Activated CD8-positive, alpha-beta T cell treated with anti-CD3 and anti-CD28 coated beads for 36 hours (primary cell): ENCODE measurements at regions of chr17 and their contacts with region 1.

Region 1: DNA sequence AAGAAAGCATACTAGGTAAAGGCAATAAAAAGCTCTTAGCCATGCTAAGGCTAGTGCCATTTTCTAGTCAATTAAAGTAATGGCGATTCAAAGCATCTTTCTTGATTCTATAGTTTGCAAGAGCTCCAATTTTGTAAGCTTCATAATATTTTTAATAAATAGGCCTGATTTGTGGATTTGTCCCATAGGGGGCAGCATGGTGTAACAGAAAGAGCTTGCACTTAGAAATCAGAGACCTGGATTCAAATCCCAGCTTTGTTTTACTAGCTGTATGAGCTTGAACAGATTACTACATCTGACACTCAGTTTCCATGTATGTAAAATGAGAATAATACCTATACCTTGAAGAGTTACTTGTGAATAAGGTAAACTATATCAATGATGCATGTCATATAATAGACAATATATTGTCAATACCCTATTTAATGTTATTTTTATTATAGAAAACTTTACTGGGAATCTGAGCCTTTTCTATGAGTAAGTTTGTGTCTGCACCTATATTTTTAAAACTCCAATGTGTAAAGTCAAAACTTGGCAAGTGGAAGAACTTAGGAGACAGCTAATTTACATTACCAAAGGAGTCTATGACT is 93.6 kb upstream of the NOG start:
- DNase-seq: peak; percentile 58
- ATAC-seq: no peak
- H3K4me3 Mint-ChIP-seq: no peak overlapping the region
- H3K27ac Mint-ChIP-seq: no peak overlapping the region
- H3K4me1 Mint-ChIP-seq: no peaks in the 10 kb centered on the region
- H3K27me3 Mint-ChIP-seq: no peaks in the 10 kb centered on the region
- CTCF ChIP-seq: peak; percentile 66

Region 2: GRCh38 chr17:56510554-56511342 is 10.9 kb after region 1 on chr17:
- CTCF ChIA-PET with region 1: interaction called, 10 read pairs
- POLR2A ChIA-PET with region 1: no interaction called
- intact Hi-C with region 1: no loop called
- DNase-seq: no peak
- ATAC-seq: no peak
- H3K4me3 Mint-ChIP-seq: no peak overlapping the region
- H3K27ac Mint-ChIP-seq: no peak overlapping the region
- H3K4me1 Mint-ChIP-seq: no peaks in the 10 kb centered on the region
- H3K27me3 Mint-ChIP-seq: peaks cover 2% of the 10 kb centered on the region
- CTCF ChIP-seq: no peak

Region 3: DNA sequence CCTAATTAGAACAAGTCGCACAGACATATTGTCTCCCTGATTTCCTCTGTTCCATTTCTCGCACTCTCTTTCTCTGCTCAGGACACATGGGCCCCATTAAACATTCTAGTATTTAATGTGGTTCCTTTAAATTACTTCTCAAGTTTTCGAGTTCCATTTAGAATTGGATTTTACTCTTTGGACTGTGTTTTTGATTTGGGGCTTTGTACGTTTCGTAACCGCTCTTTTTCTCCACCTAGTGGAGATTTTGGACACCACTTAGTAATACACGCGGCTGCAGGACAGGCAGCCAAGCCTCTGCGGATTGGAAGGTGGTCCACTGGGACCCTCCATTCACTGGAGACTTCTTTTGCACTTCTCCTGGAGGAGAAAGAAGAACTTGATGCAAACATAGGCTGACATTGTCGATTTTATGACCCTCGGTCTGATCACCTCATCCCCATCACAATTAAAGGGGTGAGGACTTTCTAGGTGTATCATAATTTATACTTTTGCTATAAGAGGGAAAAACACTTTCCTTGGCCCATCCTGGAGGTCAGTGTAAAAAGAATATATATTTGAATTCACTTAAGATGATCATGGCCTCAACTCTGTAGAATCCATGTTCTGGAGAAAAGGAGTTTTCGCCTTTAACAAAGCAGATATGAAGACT is 179.3 kb after region 1 on chr17:
- CTCF ChIA-PET with region 1: interaction called, 12 read pairs
- POLR2A ChIA-PET with region 1: no interaction called
- intact Hi-C with region 1: no loop called
- DNase-seq: peak; percentile 20
- ATAC-seq: peak; percentile 24
- H3K4me3 Mint-ChIP-seq: peak overlapping the region; percentile 56
- H3K27ac Mint-ChIP-seq: no peak overlapping the region
- H3K4me1 Mint-ChIP-seq: peaks cover 22% of the 10 kb centered on the region
- H3K27me3 Mint-ChIP-seq: peaks cover 38% of the 10 kb centered on the region
- CTCF ChIP-seq: peak; percentile 73